CD4-positive, alpha-beta memory T cell (primary cell): ENCODE measurements at regions of chr11 and their contacts with region 1.

Region 1: GRCh38 chr11:64767344-64768299 is 7.8 kb upstream of the PYGM start:
- DNase-seq: peak; percentile 74 to 81 (median 78)
- H3K4me3 ChIP-seq: peak overlapping the region in 1 of 2 donors; percentile 11
- H3K4me3 Mint-ChIP-seq: peak overlapping the region; percentile 36 to 85 (median 71)
- H3K27ac ChIP-seq: peak overlapping the region; percentile 57
- H3K27ac Mint-ChIP-seq: peak overlapping the region; percentile 89 to 97 (median 94)
- H3K4me1 ChIP-seq: peaks cover 97% of the 10 kb centered on the region
- H3K4me1 Mint-ChIP-seq: peaks cover 62 to 96% (median 84%) of the 10 kb centered on the region in 4 donors
- H3K27me3 ChIP-seq: no peaks in the 10 kb centered on the region
- H3K27me3 Mint-ChIP-seq: no peaks in the 10 kb centered on the region

Region 2: DNA sequence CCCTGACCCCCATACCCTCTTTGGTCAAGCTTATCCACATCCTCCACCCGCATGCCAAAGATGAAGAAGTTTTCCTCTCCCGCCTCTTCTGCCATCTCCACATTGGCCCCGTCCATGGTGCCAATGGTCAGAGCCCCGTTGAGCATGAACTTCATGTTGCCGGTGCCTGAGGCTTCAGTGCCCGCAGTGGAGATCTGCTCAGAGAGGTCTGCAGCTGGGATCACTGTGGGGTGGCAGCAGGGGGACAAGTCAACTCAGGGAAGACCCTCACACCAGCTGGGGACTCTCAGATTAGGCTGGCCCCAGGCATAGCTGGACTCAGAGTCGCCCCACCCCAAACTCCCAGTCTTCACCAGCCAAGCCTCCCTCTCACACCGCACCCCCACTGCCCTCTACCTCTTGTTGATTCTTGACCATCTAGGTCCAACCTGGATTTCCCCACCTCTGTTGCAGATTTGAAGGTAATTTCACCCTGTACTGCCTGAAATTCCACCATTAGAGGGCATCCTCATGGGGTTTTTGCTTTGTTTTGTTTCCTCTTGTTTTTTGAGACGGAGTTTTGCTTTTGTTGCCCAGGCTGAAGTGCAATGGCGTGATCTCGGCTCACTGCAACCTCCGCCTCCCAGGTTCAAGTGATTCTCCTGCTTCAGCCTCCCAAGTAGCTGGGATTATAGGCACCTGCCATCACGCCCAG is 17.1 kb before region 1 on chr11:
- CTCF ChIA-PET with region 1: interaction called, 135 read pairs
- POLR2A ChIA-PET with region 1: interaction called, 1,500 read pairs
- intact Hi-C with region 1: no loop called
- DNase-seq: peak in 2 of 5 donors; percentile 31 to 36
- H3K4me3 ChIP-seq: no peak overlapping the region
- H3K4me3 Mint-ChIP-seq: peak overlapping the region in 1 of 8 donors; percentile 57
- H3K27ac ChIP-seq: no peak overlapping the region
- H3K27ac Mint-ChIP-seq: peak overlapping the region; percentile 35 to 79 (median 70)
- H3K4me1 ChIP-seq: peaks cover 18% of the 10 kb centered on the region
- H3K4me1 Mint-ChIP-seq: peaks cover 20 to 50% (median 34%) of the 10 kb centered on the region in 4 donors
- H3K27me3 ChIP-seq: no peaks in the 10 kb centered on the region
- H3K27me3 Mint-ChIP-seq: no peaks in the 10 kb centered on the region

Region 3: DNA sequence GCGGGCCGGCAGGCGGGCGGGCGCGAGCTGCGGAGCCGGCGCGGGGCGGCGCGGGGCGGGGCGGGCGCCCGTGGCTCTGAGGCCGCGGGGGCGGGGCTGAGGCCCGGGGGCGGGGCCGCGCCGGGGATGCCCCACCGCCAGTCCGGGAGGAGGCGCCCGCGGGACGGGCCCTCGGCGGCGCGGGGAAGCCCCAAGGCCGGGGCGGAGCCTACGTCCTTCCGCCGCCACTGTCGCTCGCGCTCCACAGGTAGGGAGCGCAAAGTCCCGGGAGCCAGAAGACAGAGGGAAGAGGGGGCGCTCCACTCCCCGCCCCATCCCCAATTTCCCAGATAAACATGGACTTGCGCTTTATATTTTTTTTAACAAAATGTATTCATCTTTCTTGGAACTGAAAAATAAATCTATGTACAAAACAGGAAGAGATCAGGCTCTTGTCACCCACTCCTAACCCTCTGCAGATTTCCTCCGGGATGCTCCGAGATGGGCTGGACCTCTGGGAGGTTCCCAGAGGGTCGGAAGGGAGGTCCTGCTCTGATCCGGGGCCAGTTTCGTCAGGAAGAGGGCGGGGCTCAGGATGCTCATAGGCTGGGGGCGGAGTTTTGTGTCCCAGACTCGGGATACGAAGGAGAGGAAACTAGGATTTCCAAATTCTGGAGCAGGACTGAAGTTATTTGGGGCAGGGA is 35.7 kb after region 1 on chr11 and contains the start of gene MAP4K2:
- CTCF ChIA-PET with region 1: interaction called, 3 read pairs
- POLR2A ChIA-PET with region 1: interaction called, 23 read pairs
- intact Hi-C with region 1: no loop called
- DNase-seq: peak; percentile 84 to 91 (median 89)
- H3K4me3 ChIP-seq: peak within 1 kb of the TSS; percentile 79
- H3K4me3 Mint-ChIP-seq: peak within 1 kb of the TSS; percentile 87 to 92 (median 90)
- H3K27ac ChIP-seq: peak within 1 kb of the TSS; percentile 93
- H3K27ac Mint-ChIP-seq: peak within 1 kb of the TSS; percentile 94 to 97 (median 96)
- H3K4me1 ChIP-seq: peaks cover 35% of the 10 kb centered on the region
- H3K4me1 Mint-ChIP-seq: peaks cover 9 to 48% (median 24%) of the 10 kb centered on the region in 4 donors
- H3K27me3 ChIP-seq: no peaks in the 10 kb centered on the region
- H3K27me3 Mint-ChIP-seq: no peaks in the 10 kb centered on the region
- total RNA-seq, gene MAP4K2: 122 to 128 TPM